Brain microvascular endothelial cell (primary cell): ENCODE measurements at regions of chr5 and their contacts with region 1.

Region 1: GRCh38 chr5:148730943-148731861 is 76.9 kb upstream of the HTR4 start:
- DNase-seq: peak; percentile 88
- H3K4me3 ChIP-seq: no peak overlapping the region
- H3K27ac ChIP-seq: no peak overlapping the region
- H3K27me3 ChIP-seq: no peaks in the 10 kb centered on the region
- CTCF ChIP-seq: peak; percentile 88

Region 2: DNA sequence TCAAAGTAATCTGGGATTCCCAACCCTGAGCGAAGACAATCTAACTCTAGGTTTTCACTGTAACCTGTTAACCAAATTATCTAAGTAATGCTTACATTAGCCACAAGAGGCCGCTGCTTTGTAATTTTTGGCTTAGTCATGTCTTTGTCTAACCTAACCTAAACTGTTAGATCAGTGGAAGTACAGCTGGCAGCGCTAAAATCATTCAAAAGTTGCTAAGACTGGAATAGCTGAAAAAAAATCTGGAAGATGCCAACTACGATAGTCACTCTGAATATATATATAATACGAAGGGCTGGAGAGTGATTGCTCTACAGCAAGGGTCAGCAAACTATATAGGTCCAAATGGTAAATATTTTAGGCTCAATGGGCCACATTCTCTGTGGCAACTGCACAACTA is 287.2 kb before region 1 on chr5:
- in situ Hi-C with region 1: loop called (anchors 25 kb)
- DNase-seq: peak; percentile 70
- H3K4me3 ChIP-seq: no peak overlapping the region
- H3K27ac ChIP-seq: no peak overlapping the region
- H3K27me3 ChIP-seq: no peaks in the 10 kb centered on the region
- CTCF ChIP-seq: peak; percentile 60

Region 3: GRCh38 chr5:148844433-148845280 is 113.5 kb after region 1 on chr5:
- in situ Hi-C with region 1: no loop called
- DNase-seq: no peak
- H3K4me3 ChIP-seq: no peak overlapping the region
- H3K27ac ChIP-seq: no peak overlapping the region
- H3K27me3 ChIP-seq: no peaks in the 10 kb centered on the region
- CTCF ChIP-seq: peak; percentile 42

Region 4: DNA sequence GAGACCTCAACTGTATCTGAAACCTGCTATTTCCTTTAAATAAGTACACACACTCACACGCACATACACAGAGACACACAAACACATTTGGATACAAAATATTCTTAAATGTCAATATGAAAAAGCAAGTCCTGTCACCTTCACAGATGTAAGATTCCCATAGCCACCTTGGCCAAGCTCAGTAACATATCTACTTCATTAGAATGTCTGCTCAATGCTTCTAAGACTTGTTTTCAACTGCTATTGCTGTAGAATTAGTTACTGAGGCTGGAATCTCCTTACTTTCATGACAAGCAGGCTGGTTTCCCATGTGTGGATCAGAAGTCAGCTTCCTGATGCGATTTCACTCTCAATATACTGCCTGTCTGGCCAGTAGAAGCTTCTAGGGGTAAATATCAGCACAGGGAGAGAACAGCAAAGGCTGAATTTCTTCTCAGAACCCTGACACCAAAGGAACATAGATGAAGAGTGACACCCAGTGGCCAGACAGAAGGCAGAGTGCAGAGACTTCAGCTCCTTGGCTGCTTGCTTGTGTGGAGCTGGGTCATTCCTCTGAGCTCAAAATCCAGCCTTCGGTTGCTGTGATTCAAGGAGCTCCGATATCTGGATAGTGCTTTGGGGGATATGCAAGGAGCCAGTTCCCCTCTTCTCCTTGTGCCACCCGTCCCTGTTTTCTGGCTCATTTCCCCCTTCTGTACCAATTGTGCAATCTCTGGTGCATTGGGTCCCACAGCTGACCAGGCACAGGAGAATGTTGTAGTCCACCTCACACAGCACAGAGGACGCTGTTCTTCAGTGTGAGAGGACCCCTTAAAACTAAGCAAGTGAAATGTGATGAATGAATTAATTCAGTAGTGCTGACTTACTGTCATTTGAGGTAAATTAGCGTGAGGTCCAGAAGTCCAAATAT is 383.5 kb after region 1 on chr5:
- in situ Hi-C with region 1: loop called (anchors 25 kb)
- DNase-seq: peak; percentile 80
- H3K4me3 ChIP-seq: no peak overlapping the region
- H3K27ac ChIP-seq: no peak overlapping the region
- H3K27me3 ChIP-seq: no peaks in the 10 kb centered on the region
- CTCF ChIP-seq: peak; percentile 90